ENCODE measurements at regions of chr6 and their contacts with region 1.

Region 1: GRCh38 chr6:41039060-41039998 is at the start of gene UNC5CL:
- DNase-seq: peak; percentile 22
- H3K4me3 ChIP-seq: no peak within 1 kb of the TSS
- H3K27ac ChIP-seq: no peak within 1 kb of the TSS
- H3K4me1 ChIP-seq: peaks cover 2% of the 10 kb centered on the region
- H3K27me3 ChIP-seq: peaks cover 0 to 2% of the 10 kb centered on the region in 2 experiments
- CTCF ChIP-seq: peak; percentile 69 to 71
- POLR2A ChIP-seq: no peak
- total RNA-seq, gene UNC5CL: 0.20 and 0.32 TPM in 2 replicates

Region 2: GRCh38 chr6:41053041-41053440 is 13.7 kb after region 1 on chr6 and contains the start of gene APOBEC2:
- CTCF ChIA-PET with region 1: interaction called, 22 read pairs
- POLR2A ChIA-PET with region 1: no interaction called
- dilution Hi-C with region 1: no loop called
- intact Hi-C with region 1: no loop called
- DNase-seq: no peak
- H3K4me3 ChIP-seq: no peak within 1 kb of the TSS
- H3K27ac ChIP-seq: no peak within 1 kb of the TSS
- H3K4me1 ChIP-seq: peaks cover 5% of the 10 kb centered on the region
- H3K27me3 ChIP-seq: peaks cover 0 to 3% of the 10 kb centered on the region in 2 experiments
- CTCF ChIP-seq: no peak
- POLR2A ChIP-seq: no peak
- total RNA-seq, gene APOBEC2: not detected in 2 replicates